ENCODE measurements at regions of chr5 and their contacts with region 1.

Region 1: GRCh38 chr5:97094579-97095317 is 47.7 kb downstream of the LIX1 start:
- DNase-seq: peak; percentile 45
- H3K4me3 Mint-ChIP-seq: peak overlapping the region; percentile 19
- H3K27ac Mint-ChIP-seq: peak overlapping the region; percentile 67
- H3K4me1 Mint-ChIP-seq: peaks cover 28% of the 10 kb centered on the region
- H3K27me3 Mint-ChIP-seq: peaks cover 31% of the 10 kb centered on the region

Region 2: DNA sequence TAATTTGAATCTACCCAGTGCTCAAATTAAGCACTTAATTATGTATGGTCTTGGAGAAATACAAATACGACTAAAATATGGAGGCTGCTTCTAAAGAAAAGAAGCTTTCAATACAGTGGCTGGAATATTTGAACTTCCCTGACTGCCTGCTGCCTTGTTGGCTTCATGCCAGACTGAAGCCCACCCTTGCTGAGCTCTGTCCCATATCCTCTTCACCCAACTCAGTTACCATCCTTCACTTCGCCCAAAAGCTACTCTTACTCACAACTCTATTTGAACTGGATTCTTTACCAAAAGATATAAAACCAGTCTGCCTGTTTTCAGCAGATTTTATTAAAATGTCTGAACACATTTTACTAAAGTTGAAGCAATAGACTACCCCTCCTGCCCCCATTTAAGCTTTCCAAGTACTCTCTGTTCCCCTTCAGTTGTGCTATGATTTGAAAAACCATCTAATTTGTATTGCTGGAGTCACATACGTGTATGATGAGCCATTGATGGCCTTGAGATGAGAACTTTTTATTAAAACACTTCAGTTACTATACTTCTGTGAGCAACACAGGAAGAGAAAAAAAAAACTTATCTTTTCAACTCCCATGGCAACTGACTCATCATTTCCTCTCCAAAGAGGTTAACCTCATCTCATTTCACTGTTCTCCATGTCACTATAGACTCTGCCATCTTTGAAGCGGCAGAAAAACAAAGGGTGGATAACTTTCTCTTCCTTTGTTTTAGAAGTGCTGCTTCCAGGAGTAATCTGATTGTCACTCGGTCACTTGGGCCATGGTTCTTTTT is 557.6 kb before region 1 on chr5:
- intact Hi-C with region 1: loop called (anchors 5 kb)
- DNase-seq: peak; percentile 32
- H3K4me3 Mint-ChIP-seq: no peak overlapping the region
- H3K27ac Mint-ChIP-seq: peak overlapping the region; percentile 78
- H3K4me1 Mint-ChIP-seq: peaks cover 26% of the 10 kb centered on the region
- H3K27me3 Mint-ChIP-seq: peaks cover 3% of the 10 kb centered on the region

Region 3: DNA sequence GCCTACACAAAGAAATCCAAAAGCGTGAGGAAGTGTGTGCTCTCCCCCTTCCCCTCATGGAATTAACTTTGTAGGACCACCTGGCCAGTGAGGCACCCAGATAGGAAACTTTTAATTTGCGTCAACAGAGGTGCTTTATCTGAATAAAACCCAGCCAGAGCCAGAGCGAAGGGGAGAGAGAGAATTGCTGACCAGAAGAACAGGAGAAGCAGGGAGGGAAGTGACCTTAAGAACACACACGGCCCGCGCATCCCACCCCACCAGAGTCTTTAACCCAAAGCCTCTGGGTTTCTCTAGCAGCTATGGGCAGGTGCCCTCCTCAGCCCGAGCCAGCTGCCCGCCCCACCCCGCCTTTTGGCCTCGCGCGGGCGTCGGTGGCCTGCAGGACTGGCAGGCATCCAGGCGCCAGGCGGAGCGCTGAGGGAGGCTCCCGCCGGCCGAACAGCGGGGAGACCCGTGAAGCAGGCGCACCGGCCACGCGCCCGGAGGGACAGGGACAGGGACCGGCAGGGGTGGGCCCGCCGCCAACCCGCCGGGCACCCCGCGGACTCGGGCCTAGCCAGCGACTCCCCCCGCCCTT is 287.6 kb before region 1 on chr5:
- intact Hi-C with region 1: loop called (anchors 2 kb)
- DNase-seq: no peak
- H3K4me3 Mint-ChIP-seq: peak overlapping the region; percentile 99
- H3K27ac Mint-ChIP-seq: peak overlapping the region; percentile 95
- H3K4me1 Mint-ChIP-seq: peaks cover 81% of the 10 kb centered on the region
- H3K27me3 Mint-ChIP-seq: no peaks in the 10 kb centered on the region

Region 4: DNA sequence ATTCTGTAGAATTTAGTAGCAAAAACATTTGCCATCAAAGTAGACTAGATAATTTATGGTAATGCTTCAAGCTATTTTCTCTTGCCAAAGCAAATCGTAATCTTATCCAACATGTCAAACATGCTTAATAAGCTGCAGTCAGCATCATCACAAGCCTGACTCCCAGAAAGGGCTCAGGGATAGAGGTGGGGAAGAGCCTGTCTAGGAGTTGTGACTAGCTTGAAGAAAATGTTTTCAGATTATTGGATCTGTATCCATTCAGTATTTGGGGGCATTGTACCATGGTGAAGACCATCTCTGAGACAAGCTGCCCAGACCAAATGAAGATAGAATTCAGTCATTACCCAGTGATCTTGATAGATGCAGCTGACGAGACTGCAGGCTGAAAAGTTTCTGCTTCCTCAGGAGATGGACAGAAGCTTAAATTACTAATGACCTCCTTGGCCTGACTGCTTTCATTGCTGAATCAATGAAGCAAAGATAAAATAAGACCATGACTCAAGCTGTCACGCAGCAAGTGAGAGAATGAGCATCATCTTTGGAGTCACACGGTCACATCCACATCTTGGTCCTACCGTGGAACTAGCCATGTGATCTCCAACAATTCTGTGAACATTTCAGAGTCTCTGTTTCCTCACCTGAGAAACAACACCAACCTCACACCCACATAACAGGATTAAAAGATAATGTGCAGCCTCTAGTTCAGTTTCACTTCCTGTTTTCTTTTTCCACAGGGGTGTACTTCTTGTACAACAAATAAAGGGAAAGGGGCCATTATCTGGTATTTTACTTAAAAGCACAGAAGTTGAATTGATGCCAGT is 209.0 kb before region 1 on chr5:
- intact Hi-C with region 1: loop called (anchors 2 kb)
- DNase-seq: peak; percentile 52
- H3K4me3 Mint-ChIP-seq: peak overlapping the region; percentile 73
- H3K27ac Mint-ChIP-seq: peak overlapping the region; percentile 86
- H3K4me1 Mint-ChIP-seq: peaks cover 77% of the 10 kb centered on the region
- H3K27me3 Mint-ChIP-seq: no peaks in the 10 kb centered on the region

Region 5: DNA sequence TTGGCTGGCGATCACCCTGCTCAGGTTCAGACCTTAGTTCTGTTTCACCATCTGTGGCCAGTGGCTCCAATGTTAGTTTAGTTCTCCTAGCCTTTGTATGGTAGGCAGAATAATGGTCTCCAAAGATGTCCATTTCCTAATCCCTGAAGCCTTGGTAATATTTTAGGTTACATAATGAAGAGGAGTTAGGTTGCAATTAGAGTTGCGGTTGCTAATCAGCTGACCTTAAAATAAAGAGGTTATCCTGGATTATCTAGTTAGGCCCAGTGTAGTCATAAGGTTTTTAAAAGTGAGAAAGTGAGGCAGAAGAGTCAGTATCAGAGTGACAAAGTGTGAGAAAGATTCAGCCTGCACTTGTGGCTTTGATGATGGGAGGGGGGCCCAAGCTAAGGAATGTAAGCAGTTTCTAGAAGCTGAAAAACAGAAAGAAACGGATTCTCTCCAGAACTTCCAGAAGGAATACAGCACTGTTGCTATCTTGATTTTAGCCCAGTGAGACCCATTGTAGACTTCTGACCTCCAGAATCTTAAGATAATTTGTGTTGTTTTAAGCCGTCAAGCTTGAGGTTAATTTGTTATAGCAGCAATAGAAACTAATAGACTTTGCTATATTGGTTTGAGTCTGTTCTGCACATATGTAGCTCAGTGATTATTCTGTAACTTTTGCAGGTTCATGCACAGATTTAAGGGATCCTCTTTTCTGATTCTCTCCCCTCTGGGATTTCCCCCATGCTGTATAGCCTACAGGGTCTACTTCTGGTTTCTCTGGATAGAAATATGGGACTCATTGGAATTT is 137.3 kb before region 1 on chr5:
- intact Hi-C with region 1: loop called (anchors 1 kb)
- DNase-seq: no peak
- H3K4me3 Mint-ChIP-seq: peak overlapping the region; percentile 63
- H3K27ac Mint-ChIP-seq: peak overlapping the region; percentile 65
- H3K4me1 Mint-ChIP-seq: peaks cover 71% of the 10 kb centered on the region
- H3K27me3 Mint-ChIP-seq: no peaks in the 10 kb centered on the region

Region 6: DNA sequence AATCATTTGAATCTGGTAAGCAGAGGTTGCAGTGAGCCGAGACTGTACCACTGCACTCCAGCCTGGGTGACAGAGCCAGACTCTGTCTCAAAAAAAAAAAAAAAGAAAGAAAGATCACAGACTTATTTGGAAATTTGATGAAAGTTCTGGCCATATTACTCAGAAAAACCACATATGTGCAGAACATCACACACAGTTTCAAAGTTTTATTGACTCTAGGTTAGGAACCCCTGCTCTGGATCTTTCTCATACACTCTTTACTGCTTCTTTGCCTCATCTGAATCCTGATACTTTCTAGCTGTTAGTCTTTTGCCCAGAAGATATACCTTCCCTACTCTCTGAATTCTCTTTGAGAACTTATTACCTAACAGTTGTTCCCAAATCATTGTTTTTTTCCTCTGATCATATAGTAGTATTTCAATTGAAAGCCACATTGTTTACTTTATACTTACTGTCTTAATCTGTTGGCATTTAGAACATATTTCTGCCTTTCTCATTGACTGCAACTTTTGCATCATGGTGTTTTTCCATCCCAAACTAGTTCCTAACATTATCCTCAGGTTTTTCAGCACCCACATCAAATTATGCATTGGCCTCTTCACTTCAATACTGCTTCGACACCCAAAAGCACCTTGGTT is 90.2 kb before region 1 on chr5:
- intact Hi-C with region 1: loop called (anchors 1 kb)
- DNase-seq: no peak
- H3K4me3 Mint-ChIP-seq: no peak overlapping the region
- H3K27ac Mint-ChIP-seq: peak overlapping the region; percentile 32
- H3K4me1 Mint-ChIP-seq: peaks cover 15% of the 10 kb centered on the region
- H3K27me3 Mint-ChIP-seq: no peaks in the 10 kb centered on the region

Region 7: GRCh38 chr5:97183100-97183929 is 88.6 kb after region 1 on chr5 and contains the start of gene RIOK2:
- intact Hi-C with region 1: loop called (anchors 1 kb)
- DNase-seq: peak; percentile 86
- H3K4me3 Mint-ChIP-seq: peak within 1 kb of the TSS; percentile 91
- H3K27ac Mint-ChIP-seq: peak within 1 kb of the TSS; percentile 100
- H3K4me1 Mint-ChIP-seq: peaks cover 42% of the 10 kb centered on the region
- H3K27me3 Mint-ChIP-seq: peaks cover 9% of the 10 kb centered on the region
- total RNA-seq, gene RIOK2: 37.2 and 47.2 TPM in 2 replicates